ENCODE measurements at regions of chr1 and their contacts with region 1.

Region 1: DNA sequence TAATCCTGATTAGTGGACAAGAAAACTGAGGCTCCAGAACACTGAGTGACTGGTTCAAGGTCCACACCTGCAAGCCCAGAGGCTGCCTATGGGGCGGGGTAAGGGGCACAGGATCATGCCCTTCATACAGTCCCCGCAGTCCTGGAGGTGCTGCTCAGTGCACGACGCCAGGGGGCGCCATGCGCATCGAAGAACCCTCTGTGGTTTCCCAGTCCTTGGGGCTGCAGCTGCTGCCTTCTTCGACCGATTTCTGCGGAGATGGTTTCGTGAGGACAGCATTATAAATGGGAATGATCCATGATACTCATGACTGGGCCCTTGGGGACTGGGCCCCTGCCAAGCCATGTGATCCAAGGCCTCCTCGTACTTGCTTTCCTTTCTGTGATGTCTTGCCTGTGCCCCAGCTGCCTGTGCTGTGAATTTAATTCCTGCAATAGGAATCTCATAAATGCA is 37.1 kb upstream of the ARHGEF10L start:
- H3K4me3 Mint-ChIP-seq: no peak overlapping the region
- H3K27ac Mint-ChIP-seq: no peak overlapping the region
- H3K4me1 Mint-ChIP-seq: peaks cover 10% of the 10 kb centered on the region
- H3K27me3 Mint-ChIP-seq: peaks cover 26% of the 10 kb centered on the region

Region 2: DNA sequence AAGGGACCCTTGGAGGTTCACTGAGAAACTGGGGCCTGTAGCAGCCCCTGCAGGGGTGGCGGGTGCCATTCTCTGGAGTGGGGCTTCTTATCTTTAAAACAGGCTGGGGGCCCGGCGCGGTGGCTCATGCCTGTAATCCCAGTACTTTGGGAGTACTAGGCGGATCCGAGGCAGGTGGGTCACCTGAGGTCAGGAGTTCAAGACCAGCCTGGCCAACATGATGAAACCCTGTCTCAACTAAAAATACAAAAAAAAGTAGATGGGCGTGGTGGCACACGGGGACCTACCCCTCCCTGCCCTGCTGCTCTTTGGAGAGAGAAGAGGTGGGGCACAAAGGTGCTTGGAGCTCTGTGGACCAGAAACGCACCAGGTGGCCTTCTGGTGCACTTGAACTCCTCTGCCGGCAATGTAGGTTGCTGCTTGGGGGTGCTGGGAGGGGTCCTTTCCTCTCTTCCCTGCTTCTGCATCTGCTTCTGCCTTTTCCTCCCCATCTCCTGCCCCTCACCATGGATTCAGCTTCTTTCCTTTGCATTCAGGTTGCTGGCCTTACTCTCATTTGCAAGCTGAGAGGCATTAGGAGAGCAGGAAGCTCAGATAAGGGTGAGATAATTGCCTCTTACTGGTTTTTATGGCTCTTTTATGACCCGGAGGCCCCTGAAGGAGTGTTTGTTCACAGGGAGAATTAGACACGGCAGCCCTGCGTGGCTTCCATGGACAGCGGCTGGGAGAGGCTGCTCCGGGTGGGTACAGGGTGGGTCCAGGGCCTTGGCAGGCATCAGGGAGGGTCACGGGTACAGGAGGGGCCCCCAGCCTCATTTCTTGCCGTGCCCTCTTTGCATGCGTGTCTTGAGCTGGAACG is 94.5 kb after region 1 on chr1:
- intact Hi-C with region 1: no loop called
- H3K4me3 Mint-ChIP-seq: no peak overlapping the region
- H3K27ac Mint-ChIP-seq: no peak overlapping the region
- H3K4me1 Mint-ChIP-seq: peaks cover 20% of the 10 kb centered on the region
- H3K27me3 Mint-ChIP-seq: peaks cover 8% of the 10 kb centered on the region

Region 3: GRCh38 chr1:17606826-17607440 is 104.6 kb after region 1 on chr1:
- intact Hi-C with region 1: loop called (anchors 1 kb)
- H3K4me3 Mint-ChIP-seq: no peak overlapping the region
- H3K27ac Mint-ChIP-seq: no peak overlapping the region
- H3K4me1 Mint-ChIP-seq: peaks cover 8% of the 10 kb centered on the region
- H3K27me3 Mint-ChIP-seq: peaks cover 23% of the 10 kb centered on the region

Measured in dendritic cell treated with granulocyte-macrophage colony-stimulating factor and Interleukin-4, amounts not matched to agents 40 ng/mL and 50 ng/mL, for 4 days (primary cell).